B cell (primary cell): ENCODE measurements at regions of chr10 and their contacts with region 1.

Region 1: DNA sequence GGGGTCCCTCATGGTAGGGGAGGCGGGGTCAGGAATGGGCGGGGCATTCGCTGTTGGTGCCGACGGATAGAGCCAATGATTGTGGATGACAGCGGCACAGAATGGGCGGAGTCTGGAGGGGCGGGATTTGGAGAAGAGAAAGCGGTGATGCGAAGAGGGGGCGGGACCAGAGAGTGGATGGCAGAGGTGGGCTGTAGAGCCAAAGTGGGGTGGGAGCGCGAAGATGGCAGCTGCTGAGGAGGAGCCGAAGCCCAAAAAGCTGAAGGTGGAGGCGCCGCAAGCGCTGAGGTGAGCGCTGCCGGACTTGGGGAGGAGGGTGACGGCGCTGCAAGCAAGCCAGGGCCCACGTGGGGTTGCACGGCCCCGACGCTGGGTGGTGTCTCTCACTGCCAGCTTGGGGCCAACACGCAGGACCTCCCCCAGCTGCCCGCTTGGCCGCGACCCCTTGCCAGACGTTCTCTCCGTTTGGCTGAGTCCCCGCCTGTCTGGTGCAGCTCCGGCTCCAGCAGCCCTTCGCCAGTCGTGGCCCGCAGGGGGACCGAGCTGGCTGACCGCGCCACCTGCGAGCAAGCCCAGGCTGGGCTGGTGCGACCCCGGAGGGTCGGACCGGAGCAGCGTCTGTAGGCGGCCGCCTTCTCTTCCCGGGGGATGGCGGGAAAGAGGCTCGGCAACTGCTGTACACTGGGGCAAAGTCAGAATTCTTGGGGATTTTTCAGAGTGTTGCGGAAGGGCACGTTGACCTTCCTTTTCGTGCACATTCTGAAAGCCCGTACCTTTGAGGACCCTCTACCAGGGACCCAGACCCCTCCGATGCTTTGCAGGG is at the start of gene ADK:
- DNase-seq: peak; percentile 100
- ATAC-seq: peak; percentile 95
- H3K4me3 ChIP-seq: peak within 1 kb of the TSS; percentile 87 to 98 (median 94)
- H3K4me3 Mint-ChIP-seq: no peak within 1 kb of the TSS
- H3K27ac ChIP-seq: peak within 1 kb of the TSS; percentile 93 to 97
- H3K27ac Mint-ChIP-seq: no peak within 1 kb of the TSS
- H3K4me1 ChIP-seq: peaks cover 41 to 61% of the 10 kb centered on the region in 2 donors
- H3K4me1 Mint-ChIP-seq: peaks cover 55% of the 10 kb centered on the region
- H3K27me3 ChIP-seq: no peaks in the 10 kb centered on the region
- H3K27me3 Mint-ChIP-seq: no peaks in the 10 kb centered on the region
- CTCF ChIP-seq: peak; percentile 39
- total RNA-seq, gene ADK: 52.6 and 53.8 TPM in 2 replicates

Region 2: GRCh38 chr10:73997787-73998622 is 153.3 kb before region 1 on chr10 and contains the start of gene VCL:
- CTCF ChIA-PET with region 1: no interaction called
- POLR2A ChIA-PET with region 1: no interaction called
- intact Hi-C with region 1: loop called (anchors 5 kb)
- DNase-seq: peak; percentile 97
- ATAC-seq: peak; percentile 97
- H3K4me3 ChIP-seq: peak within 1 kb of the TSS; percentile 77 to 96 (median 93)
- H3K4me3 Mint-ChIP-seq: peak within 1 kb of the TSS; percentile 99
- H3K27ac ChIP-seq: peak within 1 kb of the TSS; percentile 61 to 89
- H3K27ac Mint-ChIP-seq: peak within 1 kb of the TSS; percentile 96
- H3K4me1 ChIP-seq: peaks cover 20 to 26% of the 10 kb centered on the region in 2 donors
- H3K4me1 Mint-ChIP-seq: peaks cover 45% of the 10 kb centered on the region
- H3K27me3 ChIP-seq: no peaks in the 10 kb centered on the region
- H3K27me3 Mint-ChIP-seq: no peaks in the 10 kb centered on the region
- CTCF ChIP-seq: no peak
- total RNA-seq, gene VCL: 29.8 and 37.0 TPM in 2 replicates

Region 3: GRCh38 chr10:74176380-74177139 is 25.3 kb after region 1 on chr10:
- CTCF ChIA-PET with region 1: interaction called, 7 read pairs
- POLR2A ChIA-PET with region 1: interaction called, 31 read pairs
- intact Hi-C with region 1: loop called (anchors 1 kb)
- DNase-seq: peak; percentile 98
- ATAC-seq: peak; percentile 90
- H3K4me3 ChIP-seq: peak overlapping the region; percentile 85 to 96 (median 95)
- H3K4me3 Mint-ChIP-seq: peak overlapping the region; percentile 97
- H3K27ac ChIP-seq: peak overlapping the region; percentile 92 to 95
- H3K27ac Mint-ChIP-seq: peak overlapping the region; percentile 98
- H3K4me1 ChIP-seq: peaks cover 39 to 56% of the 10 kb centered on the region in 2 donors
- H3K4me1 Mint-ChIP-seq: peaks cover 55% of the 10 kb centered on the region
- H3K27me3 ChIP-seq: no peaks in the 10 kb centered on the region
- H3K27me3 Mint-ChIP-seq: no peaks in the 10 kb centered on the region
- CTCF ChIP-seq: no peak

Region 4: DNA sequence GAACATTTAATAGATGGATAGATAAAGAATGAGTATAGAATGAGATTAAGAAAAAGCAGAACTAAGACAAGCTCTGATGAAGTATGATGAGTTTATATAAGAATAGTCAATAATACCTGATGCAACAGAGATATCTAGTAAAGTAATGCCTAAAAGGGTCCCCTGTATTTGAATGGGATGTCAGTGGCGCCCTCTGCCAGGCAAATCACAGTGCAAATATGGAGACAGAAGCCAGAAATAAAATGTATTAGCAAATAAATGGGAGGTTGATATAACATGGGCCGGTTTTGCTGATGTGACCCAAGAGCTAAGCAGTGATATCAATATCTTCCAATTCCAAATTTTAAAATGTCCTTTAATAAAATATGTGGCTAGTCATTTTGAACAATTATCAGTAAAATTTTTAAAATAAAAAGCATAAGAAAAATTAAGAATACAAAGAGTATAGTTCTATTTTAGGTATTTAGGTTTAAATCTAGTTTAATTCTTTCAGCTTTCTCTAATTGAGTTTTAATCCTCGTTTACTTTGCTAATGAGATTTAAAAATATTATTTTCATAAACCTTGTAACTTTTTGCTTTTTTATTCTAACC is 62.4 kb after region 1 on chr10:
- CTCF ChIA-PET with region 1: interaction called, 58 read pairs
- POLR2A ChIA-PET with region 1: interaction called, 3 read pairs
- intact Hi-C with region 1: loop called (anchors 1 kb)
- DNase-seq: peak; percentile 70
- ATAC-seq: peak; percentile 62
- H3K4me3 ChIP-seq: no peak overlapping the region
- H3K4me3 Mint-ChIP-seq: no peak overlapping the region
- H3K27ac ChIP-seq: peak overlapping the region in 1 of 2 donors; percentile 69
- H3K27ac Mint-ChIP-seq: peak overlapping the region; percentile 39
- H3K4me1 ChIP-seq: peaks cover 6 to 10% of the 10 kb centered on the region in 2 donors
- H3K4me1 Mint-ChIP-seq: peaks cover 23% of the 10 kb centered on the region
- H3K27me3 ChIP-seq: no peaks in the 10 kb centered on the region
- H3K27me3 Mint-ChIP-seq: no peaks in the 10 kb centered on the region
- CTCF ChIP-seq: peak; percentile 68

Region 5: DNA sequence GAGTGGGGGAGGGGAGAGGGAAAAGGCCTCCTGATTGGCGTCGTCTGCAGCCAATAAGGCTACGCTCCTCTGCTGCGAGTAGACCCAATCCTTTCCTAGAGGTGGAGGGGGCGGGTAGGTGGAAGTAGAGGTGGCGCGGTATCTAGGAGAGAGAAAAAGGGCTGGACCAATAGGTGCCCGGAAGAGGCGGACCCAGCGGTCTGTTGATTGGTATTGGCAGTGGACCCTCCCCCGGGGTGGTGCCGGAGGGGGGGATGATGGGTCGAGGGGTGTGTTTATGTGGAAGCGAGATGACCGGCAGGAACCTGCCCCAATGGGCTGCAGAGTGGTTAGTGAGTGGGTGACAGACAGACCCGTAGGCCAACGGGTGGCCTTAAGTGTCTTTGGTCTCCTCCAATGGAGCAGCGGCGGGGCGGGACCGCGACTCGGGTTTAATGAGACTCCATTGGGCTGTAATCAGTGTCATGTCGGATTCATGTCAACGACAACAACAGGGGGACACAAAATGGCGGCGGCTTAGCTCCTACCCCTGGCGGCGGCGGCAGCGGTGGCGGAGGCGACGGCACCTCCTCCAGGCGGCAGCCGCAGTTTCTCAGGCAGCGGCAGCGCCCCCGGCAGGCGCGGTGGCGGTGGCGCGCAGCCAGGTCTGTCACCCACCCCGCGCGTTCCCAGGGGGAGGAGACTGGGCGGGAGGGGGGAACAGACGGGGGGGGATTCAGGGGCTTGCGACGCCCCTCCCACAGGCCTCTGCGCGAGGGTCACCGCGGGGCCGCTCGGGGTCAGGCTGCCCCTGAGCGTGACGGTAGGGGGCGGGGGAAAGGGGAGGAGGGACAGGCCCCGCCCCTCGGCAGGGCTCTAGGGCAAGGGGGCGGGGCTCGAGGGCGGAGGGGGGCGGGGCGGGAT is 675.1 kb after region 1 on chr10 and contains the start of gene KAT6B:
- CTCF ChIA-PET with region 1: no interaction called
- POLR2A ChIA-PET with region 1: no interaction called
- intact Hi-C with region 1: loop called (anchors 1 kb)
- DNase-seq: peak; percentile 100
- ATAC-seq: peak; percentile 75
- H3K4me3 ChIP-seq: peak within 1 kb of the TSS; percentile 81 to 99 (median 90)
- H3K4me3 Mint-ChIP-seq: peak within 1 kb of the TSS; percentile 93
- H3K27ac ChIP-seq: peak within 1 kb of the TSS; percentile 91 to 99
- H3K27ac Mint-ChIP-seq: peak within 1 kb of the TSS; percentile 97
- H3K4me1 ChIP-seq: peaks cover 30 to 38% of the 10 kb centered on the region in 2 donors
- H3K4me1 Mint-ChIP-seq: peaks cover 42% of the 10 kb centered on the region
- H3K27me3 ChIP-seq: no peaks in the 10 kb centered on the region
- H3K27me3 Mint-ChIP-seq: no peaks in the 10 kb centered on the region
- CTCF ChIP-seq: peak; percentile 39
- total RNA-seq, gene KAT6B: 111 and 119 TPM in 2 replicates

Region 6: GRCh38 chr10:75210282-75211006 is 1059.2 kb after region 1 on chr10 and contains the start of gene VDAC2:
- CTCF ChIA-PET with region 1: no interaction called
- POLR2A ChIA-PET with region 1: interaction called, 3 read pairs
- intact Hi-C with region 1: loop called (anchors 1 kb)
- DNase-seq: peak; percentile 99
- ATAC-seq: peak; percentile 89
- H3K4me3 ChIP-seq: peak within 1 kb of the TSS; percentile 84 to 98 (median 93)
- H3K4me3 Mint-ChIP-seq: peak within 1 kb of the TSS; percentile 95
- H3K27ac ChIP-seq: peak within 1 kb of the TSS; percentile 97 to 100
- H3K27ac Mint-ChIP-seq: peak within 1 kb of the TSS; percentile 98
- H3K4me1 ChIP-seq: peaks cover 12 to 20% of the 10 kb centered on the region in 2 donors
- H3K4me1 Mint-ChIP-seq: peaks cover 24% of the 10 kb centered on the region
- H3K27me3 ChIP-seq: no peaks in the 10 kb centered on the region
- H3K27me3 Mint-ChIP-seq: no peaks in the 10 kb centered on the region
- CTCF ChIP-seq: no peak
- total RNA-seq, gene VDAC2: 83.6 and 86.4 TPM in 2 replicates